MCF 10A (cell line): ENCODE measurements at regions of chr3 and their contacts with region 1.

Region 1: GRCh38 chr3:193837347-193837827 is 244.4 kb downstream of the OPA1 start:
- DNase-seq: peak; percentile 92
- H3K4me3 Mint-ChIP-seq: peak overlapping the region; percentile 61
- H3K27ac Mint-ChIP-seq: no peak overlapping the region
- H3K4me1 Mint-ChIP-seq: peaks cover 34% of the 10 kb centered on the region
- H3K27me3 Mint-ChIP-seq: no peaks in the 10 kb centered on the region
- CTCF ChIP-seq: no peak

Region 2: DNA sequence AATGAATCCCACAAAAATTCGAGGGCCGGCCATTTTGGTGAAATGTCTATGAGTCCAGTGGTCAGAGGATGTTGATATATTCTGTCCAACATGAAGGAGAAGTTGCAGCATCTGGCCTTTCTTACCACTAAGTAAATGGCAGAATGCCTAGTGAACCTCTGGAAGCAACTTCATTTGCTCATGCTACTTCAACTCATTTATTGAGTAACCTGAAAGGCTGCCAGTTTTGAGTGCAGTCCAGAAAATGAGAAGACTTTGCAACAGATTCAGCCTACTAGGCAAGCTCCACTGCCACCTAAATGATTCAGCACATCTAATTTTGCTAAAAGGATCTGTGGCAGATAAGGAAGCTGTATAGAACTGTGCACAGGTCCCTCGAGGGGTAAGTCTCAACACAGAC is 20.6 kb after region 1 on chr3:
- CTCF ChIA-PET with region 1: interaction called, 3 read pairs
- POLR2A ChIA-PET with region 1: interaction called, 10 read pairs
- intact Hi-C with region 1: no loop called
- DNase-seq: peak; percentile 96
- H3K4me3 Mint-ChIP-seq: no peak overlapping the region
- H3K27ac Mint-ChIP-seq: no peak overlapping the region
- H3K4me1 Mint-ChIP-seq: peaks cover 26% of the 10 kb centered on the region
- H3K27me3 Mint-ChIP-seq: no peaks in the 10 kb centered on the region
- CTCF ChIP-seq: no peak

Region 3: GRCh38 chr3:193982258-193982659 is 144.9 kb after region 1 on chr3:
- CTCF ChIA-PET with region 1: no interaction called
- POLR2A ChIA-PET with region 1: no interaction called
- intact Hi-C with region 1: loop called (anchors 5 kb)
- DNase-seq: peak; percentile 98
- H3K4me3 Mint-ChIP-seq: no peak overlapping the region
- H3K27ac Mint-ChIP-seq: peak overlapping the region; percentile 63
- H3K4me1 Mint-ChIP-seq: peaks cover 38% of the 10 kb centered on the region
- H3K27me3 Mint-ChIP-seq: peaks cover 7% of the 10 kb centered on the region
- CTCF ChIP-seq: no peak